Posterior cingulate gyrus (tissue), 11 donors: ENCODE measurements at regions of chr6 and their contacts with region 1.

Region 1: GRCh38 chr6:90296346-90297114 is at the start of gene BACH2:
- DNase-seq: peak; percentile 87 to 98 (median 91)

Region 2: GRCh38 chr6:89805814-89806371 is 490.6 kb before region 1 on chr6:
- intact Hi-C with region 1: no loop called
- DNase-seq: no peak

Region 3: DNA sequence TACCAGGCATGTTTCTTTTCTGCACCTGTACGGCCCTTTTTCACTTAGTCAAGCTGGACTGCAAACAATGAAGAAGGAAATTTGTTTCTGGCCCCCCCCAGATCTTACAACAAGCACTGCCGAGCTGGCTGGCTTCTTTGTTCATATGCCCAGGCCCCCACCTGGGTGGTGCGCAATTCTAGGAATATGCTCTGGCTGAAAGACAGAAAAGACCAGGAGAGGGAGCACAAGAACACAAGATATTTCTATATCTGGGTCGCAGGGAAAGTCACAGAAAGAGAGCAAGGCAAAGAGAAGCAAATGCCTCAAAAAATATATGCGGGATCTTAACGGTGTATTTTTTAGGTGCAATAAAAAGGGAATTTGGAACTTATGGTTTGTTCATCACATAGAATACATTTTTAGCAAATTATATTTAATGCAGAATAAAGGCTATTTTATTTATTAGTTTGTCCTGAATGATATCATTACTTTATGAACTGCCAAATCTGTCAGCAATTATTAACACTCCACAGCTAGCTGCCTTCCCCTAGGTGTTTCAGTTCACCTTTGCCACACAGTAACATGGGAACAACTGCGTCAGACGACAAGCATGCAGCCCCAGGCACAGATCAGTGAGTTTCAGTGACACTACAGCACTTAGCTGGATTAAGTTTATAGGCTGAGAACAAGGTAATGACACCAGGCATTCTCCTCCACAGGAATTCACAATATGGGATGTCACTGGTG is 325.8 kb before region 1 on chr6:
- intact Hi-C with region 1: loop called (anchors 2 kb)
- DNase-seq: peak in 6 of 10 donors; percentile 40 to 93 (median 50)

Region 4: DNA sequence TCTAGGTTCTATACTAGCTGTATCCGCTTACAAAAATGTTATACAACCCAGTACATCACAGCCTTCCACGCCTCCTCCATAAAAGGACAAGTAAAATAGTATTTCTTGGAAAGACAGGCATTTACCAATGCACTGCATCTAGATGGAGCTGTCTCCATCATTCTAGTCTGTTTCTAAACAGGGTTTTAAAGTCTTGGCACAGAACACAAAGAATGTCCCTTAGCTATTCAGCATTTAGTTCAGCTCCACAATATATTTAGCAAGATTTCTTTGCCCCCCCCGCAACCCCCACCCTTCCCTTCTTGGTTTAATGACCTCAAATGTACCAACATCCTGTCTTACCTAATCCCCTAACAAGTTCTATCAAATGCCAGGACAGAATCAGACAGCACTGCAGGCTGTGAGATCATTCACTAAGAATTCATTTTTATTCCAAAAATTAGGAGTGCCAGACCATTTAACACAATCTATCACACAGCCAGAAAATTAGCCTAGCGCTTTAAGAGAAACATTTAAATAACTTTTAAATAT is 198.5 kb before region 1 on chr6:
- intact Hi-C with region 1: loop called (anchors 5 kb)
- DNase-seq: no peak

Region 5: DNA sequence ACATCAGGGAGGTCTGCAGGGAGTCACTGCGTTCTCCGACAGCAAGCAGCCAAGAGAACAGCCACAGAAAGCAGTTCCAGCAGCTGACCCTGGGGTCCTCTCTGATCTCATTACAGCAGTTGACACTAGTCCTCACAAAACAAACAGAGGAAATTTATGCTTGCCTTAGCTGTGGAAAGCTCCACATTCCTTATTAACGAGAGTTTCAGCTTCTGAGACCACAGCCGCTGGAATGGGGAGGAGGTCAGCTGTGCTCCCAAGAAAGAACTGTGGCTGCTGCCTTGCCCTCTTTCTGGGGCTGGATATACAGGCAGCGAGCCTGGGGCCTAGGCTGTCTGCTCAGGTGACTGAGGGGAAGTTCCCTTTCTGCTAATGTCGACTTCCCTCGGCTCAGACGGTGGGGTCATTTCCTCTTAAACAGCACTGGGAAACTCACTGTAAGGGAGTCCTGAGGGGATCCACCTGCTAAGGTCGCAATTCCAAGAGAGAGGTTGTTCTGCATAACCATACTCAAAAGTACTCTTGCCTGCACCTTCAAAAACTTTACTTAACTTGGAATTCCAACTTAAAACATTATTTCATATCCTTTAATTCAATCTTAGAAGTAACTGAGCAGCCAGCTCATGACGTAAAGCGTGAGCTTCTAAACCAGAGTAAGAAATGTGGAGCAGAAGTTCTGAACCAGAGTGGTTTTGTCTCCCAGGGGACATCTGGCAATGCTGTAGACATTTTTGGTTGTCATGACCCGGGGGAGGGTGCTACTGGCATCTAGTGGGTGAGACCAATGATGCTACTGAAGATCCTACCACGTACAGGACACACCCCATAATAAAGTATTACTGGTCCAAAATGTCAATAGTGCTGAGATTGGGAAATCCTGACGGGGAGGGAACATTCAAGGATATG is 80.2 kb before region 1 on chr6:
- intact Hi-C with region 1: loop called (anchors 2 kb)
- DNase-seq: no peak

Region 6: GRCh38 chr6:90230548-90231215 is 65.8 kb before region 1 on chr6:
- intact Hi-C with region 1: no loop called
- DNase-seq: no peak

Region 7: GRCh38 chr6:90478789-90479602 is 182.5 kb after region 1 on chr6:
- intact Hi-C with region 1: loop called (anchors 5 kb)
- DNase-seq: peak; percentile 69 to 97 (median 84)